PC-9 (cell line): ENCODE measurements at regions of chr9 and their contacts with region 1.

Region 1: DNA sequence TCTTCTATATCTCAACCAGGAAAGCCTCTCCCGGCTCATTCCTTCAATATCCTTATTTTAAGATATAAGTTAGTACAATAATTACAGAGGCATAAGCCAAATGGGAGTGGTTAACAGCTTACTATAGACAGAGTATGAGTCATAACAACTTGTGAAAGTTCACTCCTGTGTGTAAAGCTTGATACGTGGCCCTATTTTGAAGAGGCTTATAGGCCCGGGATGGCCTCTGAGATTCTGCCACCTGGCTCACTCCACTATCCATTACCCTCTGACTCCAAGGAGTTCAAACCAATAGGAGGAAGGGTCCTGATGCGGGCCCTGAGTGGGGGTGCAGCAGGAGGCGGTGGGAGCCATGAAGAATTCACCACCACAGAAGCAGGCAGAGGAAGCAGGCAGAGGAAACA is 36.6 kb downstream of the B4GALT1 start:
- DNase-seq: peak in 1 of 2 experiments; percentile 77
- H3K4me3 ChIP-seq: no peak overlapping the region
- H3K27ac ChIP-seq: peak overlapping the region; percentile 88
- H3K4me1 ChIP-seq: peaks cover 53% of the 10 kb centered on the region
- H3K27me3 ChIP-seq: no peaks in the 10 kb centered on the region
- CTCF ChIP-seq: no peak

Region 2: DNA sequence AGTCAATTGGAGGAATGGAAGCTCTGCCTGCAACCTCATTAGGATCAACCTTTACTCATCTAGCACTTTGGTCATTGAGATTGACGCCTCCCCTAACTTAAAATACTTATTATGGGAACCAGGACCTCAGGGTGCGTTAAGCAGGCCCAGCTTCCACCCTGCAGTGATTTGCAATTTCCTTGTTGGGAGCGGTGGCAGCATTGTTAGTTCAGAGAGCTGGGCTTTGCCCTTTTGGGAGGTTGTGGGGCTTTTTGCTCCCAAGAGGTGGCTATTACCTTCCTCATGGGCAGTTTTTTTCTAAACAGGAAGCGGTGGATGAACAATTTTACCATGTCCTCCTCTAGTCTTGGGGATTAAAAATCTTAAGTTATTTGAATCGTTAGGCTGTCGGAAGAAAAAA is 286.3 kb before region 1 on chr9:
- CTCF ChIA-PET with region 1: no interaction called
- POLR2A ChIA-PET with region 1: no interaction called
- intact Hi-C with region 1: no loop called
- DNase-seq: no peak
- H3K4me3 ChIP-seq: no peak overlapping the region
- H3K27ac ChIP-seq: no peak overlapping the region
- H3K4me1 ChIP-seq: no peaks in the 10 kb centered on the region
- H3K27me3 ChIP-seq: no peaks in the 10 kb centered on the region
- CTCF ChIP-seq: no peak

Region 3: DNA sequence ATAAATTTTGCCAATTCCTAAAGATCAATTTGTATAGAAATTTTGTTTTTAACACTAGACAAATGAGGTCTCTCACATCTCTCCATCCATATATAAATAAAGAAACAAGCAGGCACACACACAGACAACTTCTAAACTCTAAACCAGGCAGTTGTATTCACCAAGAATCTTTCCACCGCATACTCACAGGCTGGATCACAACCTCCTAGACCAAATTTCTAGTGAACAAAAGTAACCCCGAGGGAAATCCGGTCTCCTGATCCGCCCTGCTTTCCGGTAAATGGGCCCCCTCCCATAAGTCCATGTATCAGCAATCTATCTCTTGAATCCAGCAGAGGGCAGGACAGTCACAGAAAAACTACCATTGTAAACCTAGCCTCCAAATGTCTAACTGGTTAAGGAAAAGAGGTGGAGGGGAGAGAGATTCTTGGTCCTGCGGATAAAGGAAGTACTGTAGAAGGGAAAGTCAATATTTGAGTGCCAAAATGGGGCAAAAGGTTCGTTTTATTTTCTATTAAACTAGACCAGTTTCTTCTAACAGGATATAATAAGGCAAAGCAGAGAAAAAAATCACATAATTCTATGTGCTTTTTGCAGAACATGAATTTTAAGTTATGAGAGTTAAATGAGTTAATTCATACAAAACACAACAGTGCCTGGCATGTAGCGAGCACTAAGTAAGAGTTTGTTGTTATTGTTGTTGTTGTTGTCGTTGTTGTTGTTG is 49.2 kb before region 1 on chr9:
- CTCF ChIA-PET with region 1: no interaction called
- POLR2A ChIA-PET with region 1: no interaction called
- intact Hi-C with region 1: loop called (anchors 2 kb)
- DNase-seq: peak; percentile 49 to 56
- H3K4me3 ChIP-seq: no peak overlapping the region
- H3K27ac ChIP-seq: no peak overlapping the region
- H3K4me1 ChIP-seq: peaks cover 17% of the 10 kb centered on the region
- H3K27me3 ChIP-seq: no peaks in the 10 kb centered on the region
- CTCF ChIP-seq: peak; percentile 77

Region 4: DNA sequence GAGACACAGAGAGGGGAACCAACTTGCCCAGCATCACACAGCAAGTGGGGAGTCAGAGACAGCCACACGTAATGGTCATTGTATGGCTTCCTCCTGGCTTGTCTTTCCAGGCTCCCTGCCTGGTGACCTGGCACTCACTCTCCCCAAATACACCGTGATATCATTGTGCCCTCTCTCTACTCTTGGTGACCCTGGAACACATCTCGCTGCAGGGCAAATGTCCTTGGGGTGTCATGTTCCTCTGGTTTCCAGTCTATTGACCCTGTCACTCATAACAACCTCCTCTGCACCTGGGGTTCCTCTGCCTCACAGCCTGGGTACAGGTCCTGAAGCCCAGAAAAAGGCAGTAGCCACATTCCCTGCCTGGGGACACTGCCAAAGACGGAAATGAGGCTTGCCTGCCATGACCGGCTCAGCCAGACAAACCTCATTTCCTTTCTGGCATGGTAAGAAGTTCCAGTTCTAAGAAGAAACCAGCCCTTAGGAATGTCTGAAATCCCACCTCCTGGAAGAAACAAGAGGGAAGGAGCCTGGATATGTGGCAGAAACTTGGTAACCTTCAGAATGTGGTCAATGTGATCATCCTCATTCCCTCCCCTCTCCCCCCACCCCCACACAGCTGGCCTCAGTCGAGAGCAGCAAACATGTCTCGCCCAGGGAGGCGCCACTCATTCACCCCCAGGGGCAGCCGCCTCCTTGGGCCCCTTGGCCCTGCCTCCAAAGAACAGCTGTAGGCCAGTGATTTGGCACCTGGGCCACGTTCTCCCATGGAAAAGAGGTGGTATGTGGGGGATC is 23.5 kb before region 1 on chr9:
- CTCF ChIA-PET with region 1: no interaction called
- POLR2A ChIA-PET with region 1: no interaction called
- intact Hi-C with region 1: loop called (anchors 1 kb)
- DNase-seq: peak; percentile 75 to 81
- H3K4me3 ChIP-seq: no peak overlapping the region
- H3K27ac ChIP-seq: peak overlapping the region; percentile 44
- H3K4me1 ChIP-seq: peaks cover 42% of the 10 kb centered on the region
- H3K27me3 ChIP-seq: no peaks in the 10 kb centered on the region
- CTCF ChIP-seq: no peak

Region 5: GRCh38 chr9:33153666-33154065 is 23.2 kb after region 1 on chr9:
- CTCF ChIA-PET with region 1: no interaction called
- POLR2A ChIA-PET with region 1: interaction called, 32 read pairs
- intact Hi-C with region 1: no loop called
- DNase-seq: no peak
- H3K4me3 ChIP-seq: no peak overlapping the region
- H3K27ac ChIP-seq: no peak overlapping the region
- H3K4me1 ChIP-seq: peaks cover 58% of the 10 kb centered on the region
- H3K27me3 ChIP-seq: no peaks in the 10 kb centered on the region
- CTCF ChIP-seq: no peak

Region 6: DNA sequence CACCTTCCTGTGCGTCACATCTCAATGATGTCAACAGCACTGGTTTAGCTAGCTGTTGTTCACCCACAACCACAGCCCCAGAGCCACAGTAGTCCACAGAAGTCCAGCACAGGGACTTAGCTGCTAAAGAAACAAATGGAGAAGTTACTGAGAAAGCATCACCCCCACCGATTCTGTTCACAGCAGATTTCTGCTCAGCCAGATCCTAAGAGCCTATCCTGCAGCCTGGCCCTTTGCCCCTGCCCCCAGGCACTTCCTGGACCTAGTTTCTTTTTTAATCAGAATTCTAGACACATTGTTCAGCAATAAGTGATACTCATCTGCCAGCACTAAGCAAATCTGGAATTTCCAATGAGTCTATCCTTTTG is 29.2 kb after region 1 on chr9:
- CTCF ChIA-PET with region 1: no interaction called
- POLR2A ChIA-PET with region 1: interaction called, 32 read pairs
- intact Hi-C with region 1: loop called (anchors 1 kb)
- DNase-seq: peak; percentile 55 to 73
- H3K4me3 ChIP-seq: peak overlapping the region; percentile 93; the same call in 1 of the 2 replicates
- H3K27ac ChIP-seq: peak overlapping the region; percentile 99
- H3K4me1 ChIP-seq: peaks cover 81% of the 10 kb centered on the region
- H3K27me3 ChIP-seq: no peaks in the 10 kb centered on the region
- CTCF ChIP-seq: no peak

Region 7: GRCh38 chr9:33167046-33167808 is 36.7 kb after region 1 on chr9 and contains the start of gene B4GALT1:
- CTCF ChIA-PET with region 1: no interaction called
- POLR2A ChIA-PET with region 1: no interaction called
- intact Hi-C with region 1: loop called (anchors 1 kb)
- DNase-seq: peak; percentile 69 to 93
- H3K4me3 ChIP-seq: peak within 1 kb of the TSS; percentile 93
- H3K27ac ChIP-seq: peak within 1 kb of the TSS; percentile 100
- H3K4me1 ChIP-seq: peaks cover 54% of the 10 kb centered on the region
- H3K27me3 ChIP-seq: no peaks in the 10 kb centered on the region
- CTCF ChIP-seq: no peak
- total RNA-seq, gene B4GALT1: 75.6 and 87.2 TPM in 2 replicates